ENCODE measurements at regions of chr13 and their contacts with region 1.

Region 1: GRCh38 chr13:36736119-36736726 is 62.4 kb downstream of the SERTM1 start:
- DNase-seq: peak; percentile 37
- H3K4me3 ChIP-seq: peak overlapping the region in 1 of 2 experiments; percentile 11; a peak in 1 of 4 replicates
- H3K27ac ChIP-seq: no peak overlapping the region
- H3K4me1 ChIP-seq: no peaks in the 10 kb centered on the region; a peak in 1 of 4 replicates
- H3K27me3 ChIP-seq: no peaks in the 10 kb centered on the region
- CTCF ChIP-seq: peak; percentile 78
- EP300 ChIP-seq: no peak
- RAD21 ChIP-seq: peak; percentile 75

Region 2: GRCh38 chr13:35978603-35979316 is 757.5 kb before region 1 on chr13:
- CTCF ChIA-PET with region 1: interaction called, 20 read pairs
- POLR2A ChIA-PET with region 1: no interaction called
- DNase-seq: peak; percentile 54
- H3K4me3 ChIP-seq: no peak overlapping the region
- H3K27ac ChIP-seq: peak overlapping the region in 1 of 2 experiments; percentile 80; a peak in 2 of 4 replicates
- H3K4me1 ChIP-seq: peaks cover 0 to 2% of the 10 kb centered on the region in 2 experiments; a peak in 1 of 4 replicates
- H3K27me3 ChIP-seq: no peaks in the 10 kb centered on the region
- CTCF ChIP-seq: peak; percentile 83
- EP300 ChIP-seq: no peak
- RAD21 ChIP-seq: peak; percentile 97

Region 3: DNA sequence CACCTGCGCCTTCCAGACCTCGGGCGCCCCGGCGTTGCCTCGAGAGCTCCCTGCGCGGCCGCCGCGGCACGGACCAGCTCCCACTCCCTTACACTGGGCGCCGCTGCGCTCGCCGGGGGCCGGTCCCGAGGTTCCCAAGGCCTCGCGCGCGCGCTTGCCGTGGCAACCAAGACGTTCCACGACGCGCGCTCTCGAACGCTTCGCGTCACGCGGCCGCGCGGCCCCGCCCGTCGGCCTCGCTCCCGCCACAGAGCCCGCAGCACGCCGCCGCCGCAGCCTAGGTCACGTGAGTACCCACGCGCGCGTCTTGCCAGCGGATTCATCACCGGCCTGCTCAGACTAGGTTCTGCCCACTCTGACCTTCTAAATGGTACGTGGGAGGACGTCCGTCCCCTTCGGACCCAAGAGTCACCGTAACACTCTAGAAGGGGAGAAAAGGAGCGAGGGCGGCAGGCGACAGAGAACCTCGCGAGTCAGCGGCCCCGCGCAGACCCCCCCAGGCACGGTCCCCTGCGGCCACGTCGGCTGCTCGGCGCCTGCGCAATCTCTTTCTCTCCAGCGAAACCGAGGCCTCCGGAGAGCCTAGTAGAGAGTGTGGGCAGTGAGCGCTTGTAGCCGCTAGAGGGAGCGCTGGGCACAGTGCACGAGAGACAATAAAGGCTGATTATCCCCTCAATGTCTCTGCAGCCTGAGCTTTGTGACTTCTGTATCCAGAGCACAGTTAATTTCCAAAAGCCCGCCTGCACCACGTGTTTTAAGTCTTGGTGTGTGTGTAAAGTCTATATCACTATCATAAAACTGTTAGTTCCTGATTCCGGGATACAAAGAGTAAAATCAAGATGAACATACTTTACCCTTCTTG is 389.8 kb before region 1 on chr13 and contains the start of gene SPART:
- CTCF ChIA-PET with region 1: interaction called, 13 read pairs
- POLR2A ChIA-PET with region 1: no interaction called
- DNase-seq: peak; percentile 80
- H3K4me3 ChIP-seq: peak within 1 kb of the TSS; percentile 88 to 92
- H3K27ac ChIP-seq: peak within 1 kb of the TSS; percentile 64 to 66
- H3K4me1 ChIP-seq: no peaks in the 10 kb centered on the region; a peak in 3 of 4 replicates
- H3K27me3 ChIP-seq: no peaks in the 10 kb centered on the region
- CTCF ChIP-seq: peak; percentile 97
- EP300 ChIP-seq: no peak
- RAD21 ChIP-seq: peak; percentile 80
- polyA plus RNA-seq, gene SPART: 4.8 and 8.4 TPM in 2 replicates

Region 4: GRCh38 chr13:36453516-36453915 is 282.7 kb before region 1 on chr13:
- CTCF ChIA-PET with region 1: interaction called, 13 read pairs
- POLR2A ChIA-PET with region 1: no interaction called
- DNase-seq: no peak
- H3K4me3 ChIP-seq: no peak overlapping the region; a peak in 1 of 4 replicates
- H3K27ac ChIP-seq: no peak overlapping the region
- H3K4me1 ChIP-seq: no peaks in the 10 kb centered on the region; a peak in 2 of 4 replicates
- H3K27me3 ChIP-seq: peaks cover 30% of the 10 kb centered on the region; the same call in 1 of the 2 replicates
- CTCF ChIP-seq: peak; percentile 57
- EP300 ChIP-seq: no peak
- RAD21 ChIP-seq: peak; percentile 72

Region 5: DNA sequence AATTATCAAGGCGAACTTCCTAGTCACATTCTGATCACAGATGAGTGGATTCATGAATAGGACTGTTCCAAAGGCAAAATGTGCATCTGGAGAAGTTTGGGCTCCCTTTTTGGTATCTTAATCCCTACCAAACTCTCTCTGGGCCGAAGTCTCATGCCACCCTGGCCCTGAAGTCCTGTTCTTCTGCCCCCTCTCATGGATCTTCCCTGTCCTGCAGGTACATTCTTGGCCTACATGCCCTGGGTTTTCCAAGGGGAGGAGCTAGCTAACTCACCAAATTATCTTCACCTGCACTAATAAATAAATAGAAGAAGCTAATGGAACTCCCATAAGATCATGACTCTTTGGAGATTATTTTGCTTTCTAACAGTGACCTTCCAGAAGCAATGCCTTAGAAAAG is 12.1 kb before region 1 on chr13:
- CTCF ChIA-PET with region 1: interaction called, 12 read pairs
- POLR2A ChIA-PET with region 1: no interaction called
- DNase-seq: no peak
- H3K4me3 ChIP-seq: no peak overlapping the region
- H3K27ac ChIP-seq: no peak overlapping the region
- H3K4me1 ChIP-seq: no peaks in the 10 kb centered on the region
- H3K27me3 ChIP-seq: no peaks in the 10 kb centered on the region
- CTCF ChIP-seq: no peak
- EP300 ChIP-seq: no peak
- RAD21 ChIP-seq: no peak

Region 6: DNA sequence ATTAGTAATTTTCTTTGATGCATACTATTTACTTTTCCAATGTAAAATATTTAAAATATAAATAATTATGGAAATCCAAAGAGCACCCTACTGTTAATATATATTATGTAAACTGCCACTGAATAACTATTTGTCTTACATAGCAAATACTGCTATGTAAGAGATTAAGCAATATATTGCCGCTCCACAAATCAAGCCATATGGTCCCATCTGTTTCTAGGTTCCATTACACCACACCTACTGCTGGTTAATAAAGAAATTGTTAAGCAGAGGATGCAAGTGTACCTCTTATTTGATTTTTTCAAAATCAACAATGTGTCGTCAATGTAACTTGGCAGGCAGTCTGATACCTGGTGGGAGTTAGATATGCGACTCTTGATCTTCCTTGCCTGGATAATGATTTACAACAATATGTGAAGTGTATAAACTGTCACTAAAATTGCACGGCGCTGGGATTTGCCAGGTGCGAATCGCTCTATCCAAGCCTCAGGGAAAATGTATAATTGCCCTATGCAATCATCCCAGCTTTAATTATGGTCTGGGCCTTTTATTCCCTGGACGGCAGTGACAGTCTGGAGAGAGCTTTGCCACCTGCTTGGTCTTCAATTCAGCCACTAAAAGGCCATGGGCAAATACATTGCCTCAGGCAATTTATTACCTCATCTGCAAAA is 167.8 kb after region 1 on chr13:
- CTCF ChIA-PET with region 1: no interaction called
- POLR2A ChIA-PET with region 1: no interaction called
- DNase-seq: no peak
- H3K4me3 ChIP-seq: no peak overlapping the region
- H3K27ac ChIP-seq: peak overlapping the region in 1 of 2 experiments; percentile 53; a peak in 2 of 4 replicates
- H3K4me1 ChIP-seq: peaks cover 9% of the 10 kb centered on the region in 2 experiments; a peak in 3 of 4 replicates
- H3K27me3 ChIP-seq: no peaks in the 10 kb centered on the region
- CTCF ChIP-seq: no peak
- EP300 ChIP-seq: no peak
- RAD21 ChIP-seq: no peak

Region 7: DNA sequence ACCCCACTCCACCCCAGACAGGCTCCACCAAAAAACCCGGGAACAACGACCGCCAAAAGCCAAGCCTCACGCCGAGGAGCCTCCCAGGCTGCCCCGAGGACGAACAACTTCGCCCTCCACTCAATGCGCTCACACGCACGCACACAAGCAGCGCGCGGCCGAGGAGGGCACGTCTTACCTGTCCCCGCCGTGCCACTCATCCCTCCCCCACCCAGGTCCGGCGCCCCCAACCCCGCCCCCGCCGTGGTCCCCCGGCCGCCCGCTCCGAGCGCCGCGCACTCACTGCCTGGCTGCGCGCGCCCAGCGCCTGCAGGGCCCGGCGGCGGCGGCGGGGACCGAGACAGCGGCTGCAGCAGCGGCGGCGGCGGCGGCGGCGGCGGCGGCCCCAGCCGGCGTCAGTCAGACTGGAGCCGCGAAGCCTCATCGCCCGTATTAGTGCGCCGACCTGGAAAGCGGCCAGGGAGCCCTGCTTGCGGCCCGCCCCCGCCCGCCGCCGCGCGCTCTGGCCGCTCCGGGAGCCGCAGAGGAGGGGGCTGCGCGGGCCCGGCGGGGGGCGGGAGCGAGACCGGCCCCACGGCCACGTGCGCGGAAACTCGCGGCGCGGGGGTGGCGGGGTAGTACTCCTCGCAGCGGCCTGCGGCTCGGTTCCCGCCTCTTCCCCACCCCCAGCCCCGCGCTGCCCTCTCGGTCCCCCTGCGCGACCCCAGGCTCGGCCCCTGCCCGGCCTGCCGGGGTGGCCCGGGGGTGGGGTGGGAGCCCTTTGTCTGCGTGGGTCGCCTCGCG is 183.8 kb after region 1 on chr13 and contains the start of gene SMAD9:
- CTCF ChIA-PET with region 1: no interaction called
- POLR2A ChIA-PET with region 1: no interaction called
- DNase-seq: peak; percentile 91
- H3K4me3 ChIP-seq: peak within 1 kb of the TSS; percentile 60 to 95
- H3K27ac ChIP-seq: peak within 1 kb of the TSS; percentile 84 to 96
- H3K4me1 ChIP-seq: peaks cover 25 to 40% of the 10 kb centered on the region in 2 experiments; a peak in 3 of 4 replicates
- H3K27me3 ChIP-seq: no peaks in the 10 kb centered on the region
- CTCF ChIP-seq: no peak
- EP300 ChIP-seq: no peak; a peak in 1 of 4 replicates
- RAD21 ChIP-seq: no peak
- polyA plus RNA-seq, gene SMAD9: 3.1 and 4.0 TPM in 2 replicates

Measured in SK-N-SH (cell line).